ENCODE measurements at regions of chr15 and their contacts with region 1.

Region 1: DNA sequence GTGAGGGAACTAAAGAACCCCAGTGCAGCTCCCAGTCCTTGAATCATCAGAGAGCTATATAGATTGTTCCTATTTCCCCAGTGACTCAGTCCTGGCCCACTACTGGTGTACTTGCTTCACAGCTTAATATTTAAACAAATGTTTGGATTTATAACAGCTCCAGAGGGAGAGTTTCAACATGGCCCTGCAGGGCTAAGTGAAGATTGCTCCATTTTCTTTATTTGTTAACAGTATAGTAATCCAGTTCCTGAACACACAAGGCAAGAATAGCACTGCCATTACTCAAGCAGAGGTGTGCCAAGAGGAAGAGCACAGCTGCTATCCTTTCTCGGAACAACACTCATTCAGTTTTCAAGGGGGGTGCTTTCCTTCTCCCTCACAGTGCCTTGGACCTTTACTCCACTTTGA is 6.5 kb downstream of the SQOR start:
- DNase-seq: peak; percentile 90
- H3K4me3 ChIP-seq: no peak overlapping the region; the same call in 1 of the 2 replicates
- H3K27ac ChIP-seq: peak overlapping the region; percentile 95
- H3K27me3 ChIP-seq: no peaks in the 10 kb centered on the region
- CTCF ChIP-seq: peak; percentile 16; the same call in 1 of the 2 replicates

Region 2: GRCh38 chr15:45670091-45670490 is 28.7 kb after region 1 on chr15:
- CTCF ChIA-PET with region 1: no interaction called
- POLR2A ChIA-PET with region 1: interaction called, 17 read pairs
- DNase-seq: no peak
- H3K4me3 ChIP-seq: no peak overlapping the region
- H3K27ac ChIP-seq: peak overlapping the region; percentile 12
- H3K27me3 ChIP-seq: no peaks in the 10 kb centered on the region
- CTCF ChIP-seq: no peak

Measured in AG04450 (cell line).